Mammary epithelial cell (primary cell): ENCODE measurements at regions of chr2 and their contacts with region 1.

Region 1: DNA sequence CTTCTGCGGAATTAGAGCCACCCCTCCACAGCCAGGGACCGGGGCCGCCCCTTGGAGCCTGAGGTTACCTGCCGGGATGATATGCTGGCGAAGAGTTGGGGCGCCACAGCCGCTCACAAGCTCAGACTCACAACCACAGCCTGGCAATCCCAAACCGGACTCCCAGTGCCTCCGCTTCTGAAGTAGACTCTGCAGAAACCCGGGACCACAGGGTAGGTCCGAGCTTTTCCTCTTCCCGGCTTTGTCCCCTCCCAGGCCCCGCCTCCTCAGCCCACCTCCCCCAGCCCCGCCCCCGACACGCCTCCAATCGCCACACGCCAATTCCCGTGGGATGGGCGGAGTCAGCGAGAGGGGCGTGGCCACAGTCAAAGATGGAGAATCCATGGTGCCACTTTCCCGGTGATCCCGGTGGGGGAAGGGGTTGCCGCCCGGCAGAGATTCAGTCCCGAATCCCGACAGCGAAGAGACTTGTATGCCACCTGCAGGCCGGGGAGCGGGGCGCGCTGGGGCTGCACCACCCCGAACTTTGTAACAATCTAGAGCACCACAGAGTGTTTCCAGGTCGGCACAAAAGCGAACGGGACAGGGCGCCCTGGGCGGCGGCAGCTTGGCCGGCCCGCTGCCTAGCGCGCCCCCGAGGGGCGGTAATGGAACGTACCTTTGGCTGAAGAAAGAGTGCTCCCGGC is at the start of gene IDH1:
- DNase-seq: peak; percentile 95
- H3K4me3 ChIP-seq: peak within 1 kb of the TSS; percentile 73 to 97 (median 83)
- H3K27ac ChIP-seq: peak within 1 kb of the TSS; percentile 32
- H3K4me1 ChIP-seq: peaks cover 30% of the 10 kb centered on the region
- H3K27me3 ChIP-seq: no peaks in the 10 kb centered on the region
- CTCF ChIP-seq: peak; percentile 48 to 60
- total RNA-seq, gene IDH1: 113 to 125 TPM

Region 2: DNA sequence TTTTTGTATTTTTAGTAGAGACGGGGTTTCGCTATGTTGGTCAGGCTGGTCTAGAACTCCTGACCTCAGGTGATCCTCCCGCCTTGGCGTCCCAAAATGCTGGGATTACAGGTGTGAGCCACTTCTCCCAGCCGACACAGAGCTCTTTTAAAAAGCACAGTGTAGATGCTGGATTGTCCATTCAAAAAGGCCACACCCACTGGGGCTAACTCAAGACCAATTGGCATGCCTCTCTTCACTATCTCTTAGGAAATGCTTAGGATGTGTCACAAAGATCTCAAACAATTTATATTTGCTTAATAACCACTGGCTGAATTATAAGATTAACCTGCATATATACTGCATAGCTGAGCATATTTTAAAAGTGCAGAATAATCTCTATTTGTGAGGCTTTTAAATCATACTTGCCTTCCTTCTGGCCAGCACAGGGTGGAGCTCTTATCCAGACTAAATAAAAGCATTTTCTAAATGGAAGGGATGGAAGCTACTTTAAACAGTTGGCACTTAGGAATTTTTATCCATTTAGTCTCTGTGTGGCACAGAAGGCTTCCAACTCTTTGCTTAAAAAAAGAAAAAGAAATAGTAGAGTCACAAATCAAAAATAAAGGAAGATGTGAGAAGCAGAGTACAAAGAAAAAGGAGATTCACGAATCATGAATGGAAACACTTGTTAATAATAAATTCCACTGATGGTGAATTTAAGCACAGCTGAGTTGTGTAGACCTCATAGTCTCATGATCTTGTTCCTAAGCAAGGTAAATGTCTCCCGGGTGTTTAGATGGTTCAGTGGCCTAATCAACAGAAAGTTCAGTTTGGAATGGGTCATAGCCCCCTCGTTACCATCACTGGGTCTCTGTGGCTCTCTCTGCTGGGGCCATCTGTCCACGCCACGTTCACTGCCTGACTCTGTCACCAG is 153.0 kb before region 1 on chr2:
- CTCF ChIA-PET with region 1: no interaction called
- dilution Hi-C with region 1: loop called (anchors 25 kb)
- in situ Hi-C with region 1: no loop called
- intact Hi-C with region 1: loop called (anchors 1 kb)
- DNase-seq: peak; percentile 35
- H3K4me3 ChIP-seq: no peak overlapping the region
- H3K27ac ChIP-seq: no peak overlapping the region
- H3K4me1 ChIP-seq: no peaks in the 10 kb centered on the region
- H3K27me3 ChIP-seq: no peaks in the 10 kb centered on the region
- CTCF ChIP-seq: peak; percentile 60 to 64

Region 3: GRCh38 chr2:208175069-208175839 is 79.8 kb before region 1 on chr2:
- CTCF ChIA-PET with region 1: interaction called, 22 read pairs
- dilution Hi-C with region 1: no loop called
- in situ Hi-C with region 1: loop called in 1 of 2 experiments (anchors 10 kb)
- intact Hi-C with region 1: loop called (anchors 1 kb)
- DNase-seq: peak; percentile 72
- H3K4me3 ChIP-seq: no peak overlapping the region
- H3K27ac ChIP-seq: no peak overlapping the region
- H3K4me1 ChIP-seq: peaks cover 5% of the 10 kb centered on the region
- H3K27me3 ChIP-seq: no peaks in the 10 kb centered on the region
- CTCF ChIP-seq: peak; percentile 91 to 93

Region 4: GRCh38 chr2:208222351-208222750 is 32.7 kb before region 1 on chr2:
- CTCF ChIA-PET with region 1: interaction called, 5 read pairs
- dilution Hi-C with region 1: no loop called
- in situ Hi-C with region 1: no loop called
- intact Hi-C with region 1: loop called (anchors 2 kb)
- DNase-seq: peak; percentile 95
- H3K4me3 ChIP-seq: no peak overlapping the region
- H3K27ac ChIP-seq: peak overlapping the region; percentile 1
- H3K4me1 ChIP-seq: peaks cover 27% of the 10 kb centered on the region
- H3K27me3 ChIP-seq: no peaks in the 10 kb centered on the region
- CTCF ChIP-seq: no peak

Region 5: GRCh38 chr2:208228476-208228875 is 26.5 kb before region 1 on chr2:
- CTCF ChIA-PET with region 1: interaction called, 16 read pairs
- dilution Hi-C with region 1: no loop called
- in situ Hi-C with region 1: no loop called
- intact Hi-C with region 1: loop called (anchors 2 kb)
- DNase-seq: no peak
- H3K4me3 ChIP-seq: no peak overlapping the region
- H3K27ac ChIP-seq: no peak overlapping the region
- H3K4me1 ChIP-seq: peaks cover 12% of the 10 kb centered on the region
- H3K27me3 ChIP-seq: no peaks in the 10 kb centered on the region
- CTCF ChIP-seq: no peak

Region 6: DNA sequence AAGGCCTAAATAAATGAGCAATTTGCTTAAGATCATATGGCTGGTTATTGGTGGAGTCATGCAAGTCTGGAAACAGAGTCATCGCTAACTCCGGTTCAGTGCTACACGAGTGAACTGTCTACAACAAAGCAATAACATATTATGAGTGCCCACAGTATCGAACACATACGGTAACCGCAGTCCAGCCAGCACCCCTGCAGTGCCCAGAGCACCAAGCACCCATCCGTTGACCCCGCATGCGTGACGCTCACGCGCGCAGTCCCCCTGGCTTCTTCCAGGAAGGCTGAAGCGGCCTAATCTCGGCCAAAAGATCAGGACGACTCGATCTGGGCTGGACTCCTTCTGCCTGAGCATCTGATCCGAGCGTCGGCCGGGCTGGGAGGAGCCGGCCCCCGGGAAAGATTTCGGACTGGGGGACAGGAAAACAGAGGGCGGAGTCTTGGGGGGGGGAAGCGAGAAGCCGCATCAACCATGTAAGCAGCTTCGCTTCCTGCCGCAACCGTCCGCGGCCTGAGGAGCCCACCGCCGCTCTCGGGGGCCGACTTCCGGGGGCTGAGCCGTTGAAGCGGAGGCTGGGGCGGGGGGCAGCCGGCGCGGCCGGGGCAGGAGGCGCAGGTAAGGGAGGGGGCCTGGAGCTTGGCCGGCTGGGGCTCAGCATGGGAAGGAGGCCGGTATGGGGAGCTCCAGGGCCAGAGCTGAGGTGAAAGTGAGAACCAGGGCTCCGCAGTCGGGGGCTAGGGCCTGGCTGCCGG is 11.0 kb after region 1 on chr2 and contains the start of gene PIKFYVE:
- CTCF ChIA-PET with region 1: no interaction called
- dilution Hi-C with region 1: no loop called
- in situ Hi-C with region 1: no loop called
- intact Hi-C with region 1: loop called (anchors 1 kb)
- DNase-seq: peak; percentile 98
- H3K4me3 ChIP-seq: peak within 1 kb of the TSS; percentile 61 to 83 (median 83)
- H3K27ac ChIP-seq: peak within 1 kb of the TSS; percentile 71
- H3K4me1 ChIP-seq: peaks cover 16% of the 10 kb centered on the region
- H3K27me3 ChIP-seq: no peaks in the 10 kb centered on the region
- CTCF ChIP-seq: peak in 1 of 2 donors; percentile 1
- total RNA-seq, gene PIKFYVE: 31.9 to 44.2 TPM